Aorta (tissue), 5 donors: ENCODE measurements at regions of chr3 and their contacts with region 1.

Region 1: DNA sequence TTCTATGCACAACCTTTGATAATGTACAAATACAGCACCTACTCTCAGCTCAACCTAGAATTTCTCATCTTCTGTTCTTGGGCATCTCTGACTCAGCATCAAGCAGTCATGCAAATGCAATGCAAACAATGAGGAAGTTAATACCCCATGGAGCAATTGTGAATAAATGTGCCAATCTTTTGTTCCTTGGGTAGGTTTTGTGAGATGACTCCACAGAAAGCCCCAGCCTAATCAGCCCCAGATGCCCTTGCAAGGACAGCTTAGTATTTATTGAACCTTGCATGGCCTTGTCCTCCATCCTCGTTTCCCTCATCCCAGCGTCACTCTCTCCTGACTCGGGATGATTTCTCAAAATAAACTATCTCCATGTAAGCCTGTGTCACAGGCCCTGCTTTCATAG is 494.7 kb upstream of the NECTIN3 start:
- DNase-seq: no peak
- ATAC-seq: no peak
- H3K4me3 ChIP-seq: no peak overlapping the region
- H3K27ac ChIP-seq: no peak overlapping the region
- H3K4me1 ChIP-seq: peaks cover 0 to 2% of the 10 kb centered on the region in 2 donors
- H3K27me3 ChIP-seq: no peaks in the 10 kb centered on the region

Region 2: DNA sequence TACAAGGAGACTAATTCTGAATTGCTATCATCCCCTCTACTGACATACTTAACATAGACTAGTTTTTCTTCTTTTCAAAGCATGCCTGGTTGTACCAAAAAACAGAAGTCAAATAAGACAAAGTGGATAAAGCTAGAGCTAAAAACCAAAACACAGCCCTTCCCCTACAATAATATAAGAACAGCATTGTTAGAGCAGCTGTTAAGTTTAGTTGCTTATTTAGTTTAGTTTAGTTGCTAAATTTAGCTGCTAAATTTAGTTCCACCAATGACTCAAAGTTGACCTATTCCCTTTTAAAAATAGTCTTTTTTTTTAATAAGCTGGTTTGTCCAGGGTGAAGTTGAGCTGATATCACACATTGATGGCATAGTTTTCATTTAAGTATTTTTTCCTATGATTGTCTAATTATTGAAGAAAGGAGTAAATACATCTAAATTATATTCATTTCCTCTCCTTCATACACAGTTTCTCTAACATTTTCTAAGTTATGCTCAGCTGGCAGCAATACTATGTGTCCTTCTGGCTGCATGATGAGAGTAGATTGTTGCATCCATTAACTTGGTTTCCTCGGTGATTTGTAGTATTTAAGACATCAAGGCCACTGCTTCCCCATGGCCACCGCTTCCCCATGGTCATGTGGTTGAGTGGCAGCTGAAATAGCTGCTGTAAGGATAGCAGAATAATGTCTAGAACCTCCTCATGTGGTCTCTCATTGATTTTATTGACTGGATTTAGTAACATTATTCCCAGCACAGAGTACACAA is 223.9 kb before region 1 on chr3:
- intact Hi-C with region 1: loop called in 1 of 2 experiments (anchors 5 kb)
- DNase-seq: no peak
- ATAC-seq: no peak
- H3K4me3 ChIP-seq: no peak overlapping the region
- H3K27ac ChIP-seq: peak overlapping the region in 1 of 2 donors; percentile 48
- H3K4me1 ChIP-seq: peaks cover 0 to 2% of the 10 kb centered on the region in 2 donors
- H3K27me3 ChIP-seq: no peaks in the 10 kb centered on the region

Region 3: DNA sequence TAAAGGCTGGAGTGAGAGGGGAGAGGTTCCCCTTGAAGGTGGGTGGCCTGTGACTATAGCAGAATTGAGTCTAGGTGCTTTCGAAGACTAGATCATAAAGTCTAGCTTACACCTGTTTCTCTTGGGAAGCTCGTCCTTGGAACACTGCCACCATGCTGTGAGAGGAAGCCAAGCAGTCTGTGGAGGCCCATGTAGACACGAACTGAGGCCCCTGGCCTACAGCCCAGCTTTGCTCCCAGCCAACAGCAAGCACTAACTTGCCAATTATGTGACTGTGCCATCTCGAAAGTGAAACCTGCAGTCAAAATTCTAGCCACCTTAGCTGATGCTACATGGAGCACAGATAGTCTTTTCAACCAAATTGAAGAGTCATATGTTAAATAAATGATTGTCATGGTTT is 304.1 kb after region 1 on chr3:
- intact Hi-C with region 1: no loop called
- DNase-seq: peak in 1 of 2 donors; percentile 46
- ATAC-seq: no peak
- H3K4me3 ChIP-seq: no peak overlapping the region
- H3K27ac ChIP-seq: no peak overlapping the region
- H3K4me1 ChIP-seq: peaks cover 0 to 2% of the 10 kb centered on the region in 2 donors
- H3K27me3 ChIP-seq: no peaks in the 10 kb centered on the region

Region 4: GRCh38 chr3:111936191-111936841 is 1359.4 kb after region 1 on chr3:
- intact Hi-C with region 1: loop called in 1 of 2 experiments (anchors 10 kb)
- DNase-seq: no peak
- ATAC-seq: no peak
- H3K4me3 ChIP-seq: no peak overlapping the region
- H3K27ac ChIP-seq: no peak overlapping the region
- H3K4me1 ChIP-seq: peaks cover 2% of the 10 kb centered on the region in 2 donors
- H3K27me3 ChIP-seq: no peaks in the 10 kb centered on the region